ENCODE measurements at regions of chr3 and their contacts with region 1.

Region 1: GRCh38 chr3:72818092-72818773 is 30.0 kb downstream of the SHQ1 start:
- DNase-seq: peak; percentile 13 to 21
- ATAC-seq: peak in 1 of 2 experiments; percentile 54; a peak in 2 of 6 replicates
- H3K4me3 ChIP-seq: no peak overlapping the region
- H3K27ac ChIP-seq: no peak overlapping the region
- H3K4me1 ChIP-seq: peaks cover 16% of the 10 kb centered on the region; the same call in 2 of the 3 replicates
- CTCF ChIP-seq: peak; percentile 63
- EP300 ChIP-seq: no peak
- POLR2A ChIP-seq: no peak
- RAD21 ChIP-seq: peak; percentile 78 to 80

Region 2: GRCh38 chr3:71930056-71930991 is 887.9 kb before region 1 on chr3:
- CTCF ChIA-PET with region 1: interaction called, 14 read pairs
- POLR2A ChIA-PET with region 1: no interaction called
- DNase-seq: peak; percentile 23 to 35
- ATAC-seq: peak; percentile 74 to 83; a peak in 5 of 6 replicates
- H3K4me3 ChIP-seq: no peak overlapping the region
- H3K27ac ChIP-seq: no peak overlapping the region
- H3K4me1 ChIP-seq: no peaks in the 10 kb centered on the region
- CTCF ChIP-seq: 0 out of 3 replicates have a peak, but pooled peaks have one; percentile 16
- EP300 ChIP-seq: no peak
- POLR2A ChIP-seq: no peak
- RAD21 ChIP-seq: peak in 1 of 2 experiments; percentile 32; a peak in 2 of 5 replicates

Region 3: DNA sequence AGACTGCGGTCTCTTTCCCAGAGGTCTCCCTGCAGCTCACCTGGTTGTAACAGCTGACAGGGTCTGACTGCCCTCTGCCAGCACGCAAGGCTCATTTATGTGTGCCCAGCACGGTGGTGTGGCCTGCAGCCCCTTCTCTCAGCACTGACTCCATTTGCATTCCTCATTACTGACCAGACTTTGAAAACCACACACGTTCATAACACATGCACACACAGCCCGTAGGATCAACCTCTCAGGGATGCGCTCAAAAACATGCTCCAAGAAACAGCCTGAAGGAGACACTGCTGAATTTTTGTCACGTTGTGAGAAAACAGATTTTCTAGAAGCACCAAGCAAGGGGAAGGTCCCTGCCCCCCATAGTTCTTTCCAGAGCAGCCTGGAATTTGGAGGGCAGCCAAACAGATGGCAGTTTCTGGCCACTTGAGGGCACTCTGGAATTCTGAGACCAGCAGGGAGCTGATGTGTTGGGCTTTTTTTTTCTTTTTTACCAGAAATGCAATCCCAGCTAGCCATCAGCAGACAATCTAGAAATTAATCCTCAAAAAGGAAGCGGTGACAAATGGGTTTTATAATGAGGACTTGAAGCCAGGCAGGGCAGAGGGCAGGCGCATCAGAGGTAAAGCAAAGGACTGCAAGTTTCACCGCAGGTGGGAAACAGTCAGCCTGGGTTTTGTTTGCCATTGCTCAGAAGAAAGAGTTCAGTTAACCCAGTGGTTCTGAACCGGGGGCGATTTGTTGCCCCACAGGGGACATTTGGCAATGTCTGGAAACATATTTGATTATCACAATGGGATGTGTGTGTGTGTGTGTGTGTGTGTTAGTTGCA is 862.8 kb before region 1 on chr3:
- CTCF ChIA-PET with region 1: interaction called, 126 read pairs
- POLR2A ChIA-PET with region 1: no interaction called
- DNase-seq: peak; percentile 36 to 48
- ATAC-seq: peak; percentile 77 to 85; a peak in 5 of 6 replicates
- H3K4me3 ChIP-seq: no peak overlapping the region
- H3K27ac ChIP-seq: no peak overlapping the region
- H3K4me1 ChIP-seq: no peaks in the 10 kb centered on the region
- CTCF ChIP-seq: peak; percentile 80
- EP300 ChIP-seq: no peak
- POLR2A ChIP-seq: no peak
- RAD21 ChIP-seq: peak; percentile 80 to 88

Region 4: DNA sequence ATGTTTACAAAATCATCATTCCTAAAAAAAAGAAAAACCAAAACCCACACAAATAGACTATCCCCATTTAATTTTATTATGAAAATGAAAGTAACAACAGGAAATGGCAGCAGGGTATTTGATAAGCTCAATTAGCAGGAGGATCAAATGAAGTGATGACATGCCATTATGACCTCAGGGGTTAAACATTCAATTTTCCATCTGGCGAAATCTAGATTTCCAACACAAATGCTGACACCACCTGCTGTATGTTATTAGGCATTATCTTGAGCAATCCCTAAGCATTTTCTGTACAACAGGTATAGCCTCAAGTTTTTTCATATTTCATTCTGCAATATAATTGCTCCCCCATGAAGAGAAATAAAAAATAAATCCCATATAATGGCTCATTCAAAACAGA is 27.1 kb before region 1 on chr3:
- CTCF ChIA-PET with region 1: interaction called, 15 read pairs
- POLR2A ChIA-PET with region 1: no interaction called
- DNase-seq: no peak
- ATAC-seq: no peak
- H3K4me3 ChIP-seq: no peak overlapping the region
- H3K27ac ChIP-seq: no peak overlapping the region
- H3K4me1 ChIP-seq: no peaks in the 10 kb centered on the region
- CTCF ChIP-seq: no peak
- EP300 ChIP-seq: no peak
- POLR2A ChIP-seq: no peak
- RAD21 ChIP-seq: no peak